CD4-positive, alpha-beta T cell (primary cell): ENCODE measurements at regions of chr20 and their contacts with region 1.

Region 1: DNA sequence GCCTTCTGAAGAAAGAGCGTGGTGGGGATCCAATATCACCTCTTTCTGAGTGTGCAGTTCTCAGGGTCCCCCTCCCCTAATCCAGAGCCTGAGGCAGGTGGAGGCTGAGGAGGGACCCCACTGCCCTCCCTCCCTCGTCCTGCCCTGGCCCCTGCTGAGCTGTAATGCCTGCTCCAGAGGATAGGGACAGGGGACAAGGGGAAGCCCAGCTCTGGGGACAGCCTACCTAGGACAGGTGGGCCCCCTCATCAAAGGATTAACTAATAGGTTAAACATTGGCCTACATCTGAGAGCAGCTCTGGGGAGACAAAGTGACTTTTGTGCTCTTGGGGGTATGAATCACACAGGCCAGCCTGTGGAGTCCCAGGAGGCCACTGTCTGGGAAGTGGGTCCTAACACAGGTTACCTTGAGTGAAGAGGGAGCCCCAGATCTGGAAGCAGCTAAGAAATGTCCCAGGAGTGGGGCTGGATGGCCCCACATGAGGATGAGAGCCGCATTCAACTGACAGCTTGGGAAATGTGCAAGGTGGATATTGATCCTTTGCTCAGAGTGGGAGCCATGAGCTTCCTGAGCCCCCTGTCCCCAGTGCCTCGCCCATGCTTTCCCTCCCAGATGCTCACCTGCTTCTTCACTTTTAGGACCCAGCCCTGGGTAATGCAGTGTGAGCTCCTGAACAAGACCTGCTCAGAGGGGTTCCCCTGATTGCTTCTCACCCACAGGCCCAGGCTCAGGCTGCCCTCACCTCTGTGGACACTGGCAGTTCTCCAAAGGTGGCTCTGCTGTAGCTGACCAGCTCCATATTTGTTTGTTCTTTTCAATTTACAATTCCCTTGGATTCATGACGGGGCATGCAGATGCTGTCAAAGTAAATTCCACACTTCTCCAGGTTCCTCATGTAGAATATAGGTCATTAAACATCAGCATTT is 17.8 kb upstream of the CST9L start:
- DNase-seq: no peak
- ATAC-seq: no peak
- H3K4me3 ChIP-seq: no peak overlapping the region
- H3K4me3 Mint-ChIP-seq: no peak overlapping the region
- H3K27ac ChIP-seq: no peak overlapping the region
- H3K27ac Mint-ChIP-seq: no peak overlapping the region
- H3K4me1 ChIP-seq: no peaks in the 10 kb centered on the region
- H3K4me1 Mint-ChIP-seq: no peaks in the 10 kb centered on the region
- H3K27me3 ChIP-seq: peaks cover 5 to 17% of the 10 kb centered on the region in 2 experiments
- H3K27me3 Mint-ChIP-seq: peaks cover 21% of the 10 kb centered on the region
- CTCF ChIP-seq: no peak

Region 2: GRCh38 chr20:23441850-23442313 is 144.2 kb before region 1 on chr20:
- CTCF ChIA-PET with region 1: no interaction called
- POLR2A ChIA-PET with region 1: no interaction called
- intact Hi-C with region 1: no loop called
- DNase-seq: peak; percentile 17 to 74 (median 40)
- ATAC-seq: peak; percentile 51
- H3K4me3 ChIP-seq: no peak overlapping the region
- H3K4me3 Mint-ChIP-seq: no peak overlapping the region
- H3K27ac ChIP-seq: no peak overlapping the region
- H3K27ac Mint-ChIP-seq: no peak overlapping the region
- H3K4me1 ChIP-seq: no peaks in the 10 kb centered on the region
- H3K4me1 Mint-ChIP-seq: no peaks in the 10 kb centered on the region
- H3K27me3 ChIP-seq: no peaks in the 10 kb centered on the region
- H3K27me3 Mint-ChIP-seq: no peaks in the 10 kb centered on the region
- CTCF ChIP-seq: peak; percentile 78

Region 3: DNA sequence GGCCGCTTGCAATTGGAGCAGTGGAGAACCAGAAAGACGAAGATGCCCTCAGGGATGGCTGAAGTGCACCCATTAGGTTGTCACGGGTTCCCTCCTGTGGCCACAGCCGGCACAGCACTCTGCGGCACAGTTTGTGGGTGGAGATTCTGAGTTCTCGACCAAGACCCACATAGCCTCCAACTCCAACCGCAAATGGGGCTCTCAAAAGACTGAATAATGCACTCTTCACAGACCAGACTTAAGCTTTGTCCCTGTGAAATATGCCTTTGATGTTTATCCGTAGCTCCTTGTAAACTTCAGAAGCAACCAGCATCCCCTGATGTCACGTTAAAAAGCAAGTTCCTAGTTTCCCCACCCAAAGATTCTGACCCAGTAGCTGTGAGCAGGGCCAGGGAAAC is 20.6 kb after region 1 on chr20:
- CTCF ChIA-PET with region 1: no interaction called
- POLR2A ChIA-PET with region 1: no interaction called
- intact Hi-C with region 1: no loop called
- DNase-seq: peak; percentile 11 to 67 (median 45)
- ATAC-seq: peak; percentile 70
- H3K4me3 ChIP-seq: no peak overlapping the region
- H3K4me3 Mint-ChIP-seq: no peak overlapping the region
- H3K27ac ChIP-seq: no peak overlapping the region
- H3K27ac Mint-ChIP-seq: no peak overlapping the region
- H3K4me1 ChIP-seq: peaks cover 2% of the 10 kb centered on the region
- H3K4me1 Mint-ChIP-seq: no peaks in the 10 kb centered on the region
- H3K27me3 ChIP-seq: no peaks in the 10 kb centered on the region
- H3K27me3 Mint-ChIP-seq: peaks cover 5% of the 10 kb centered on the region
- CTCF ChIP-seq: peak; percentile 72

Region 4: GRCh38 chr20:23641936-23642751 is 56.1 kb after region 1 on chr20:
- CTCF ChIA-PET with region 1: no interaction called
- POLR2A ChIA-PET with region 1: no interaction called
- intact Hi-C with region 1: loop called in 1 of 2 experiments (anchors 10 kb)
- DNase-seq: peak in 2 of 14 experiments; percentile 28 to 35
- ATAC-seq: no peak
- H3K4me3 ChIP-seq: no peak overlapping the region
- H3K4me3 Mint-ChIP-seq: no peak overlapping the region
- H3K27ac ChIP-seq: no peak overlapping the region
- H3K27ac Mint-ChIP-seq: no peak overlapping the region
- H3K4me1 ChIP-seq: no peaks in the 10 kb centered on the region
- H3K4me1 Mint-ChIP-seq: no peaks in the 10 kb centered on the region
- H3K27me3 ChIP-seq: peaks cover 0 to 1% of the 10 kb centered on the region in 2 experiments
- H3K27me3 Mint-ChIP-seq: peaks cover 11% of the 10 kb centered on the region
- CTCF ChIP-seq: no peak